HepG2 (cell line): ENCODE measurements at regions of chr6 and their contacts with region 1.

Region 1: DNA sequence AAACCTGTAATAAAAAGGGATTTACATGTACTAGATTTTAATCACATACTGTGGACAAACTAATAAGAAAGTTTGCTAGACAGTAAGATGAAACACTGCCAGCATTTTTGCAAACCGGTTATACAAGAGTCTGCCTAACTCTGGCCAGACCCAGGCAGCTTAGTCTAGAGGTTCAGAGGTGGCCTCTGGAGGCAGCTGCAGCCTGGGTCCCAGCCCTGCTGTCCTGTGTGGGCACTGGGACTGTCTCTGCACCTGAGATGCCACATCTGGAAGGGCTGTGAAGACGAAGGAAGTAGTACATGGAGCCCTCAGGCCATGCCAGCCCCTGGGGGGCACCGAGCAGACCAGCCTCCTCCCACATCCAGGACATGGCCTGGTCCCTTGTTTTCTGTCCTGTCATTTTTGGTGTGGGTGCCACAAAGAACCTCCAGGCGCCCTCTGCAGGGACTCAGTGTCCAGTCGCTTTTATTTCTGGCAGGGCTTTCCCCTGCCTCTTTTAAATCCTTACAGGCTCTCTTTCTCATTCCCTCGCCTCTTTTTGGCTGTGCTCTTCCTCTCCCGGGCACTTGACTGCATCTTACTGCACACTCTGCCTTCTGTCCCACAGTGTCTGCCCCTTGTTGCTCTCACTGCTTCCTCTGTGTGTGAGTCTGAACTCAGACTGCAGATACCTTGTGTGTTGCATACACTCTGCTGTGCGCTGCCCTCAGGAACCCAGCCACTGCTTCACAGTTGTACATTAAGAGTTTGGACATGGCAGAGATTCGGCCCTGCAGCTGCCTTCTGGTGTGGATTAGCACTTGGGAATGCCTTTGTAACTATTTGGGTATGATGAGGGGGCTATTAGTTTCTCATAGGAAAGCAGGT is 216.7 kb downstream of the ZDHHC14 start:
- DNase-seq: peak; percentile 56
- ATAC-seq: peak; percentile 90
- H3K4me3 ChIP-seq: no peak overlapping the region
- H3K27ac ChIP-seq: no peak overlapping the region
- H3K4me1 ChIP-seq: peaks cover 9% of the 10 kb centered on the region; the same call in 1 of the 2 replicates
- H3K27me3 ChIP-seq: no peaks in the 10 kb centered on the region
- CTCF ChIP-seq: peak; percentile 90
- EP300 ChIP-seq: no peak
- POLR2A ChIP-seq: no peak
- RAD21 ChIP-seq: peak; percentile 94

Region 2: GRCh38 chr6:157314705-157315321 is 282.9 kb before region 1 on chr6:
- CTCF ChIA-PET with region 1: interaction called, 15 read pairs
- POLR2A ChIA-PET with region 1: no interaction called
- in situ Hi-C with region 1: no loop called
- intact Hi-C with region 1: loop called (anchors 1 kb)
- DNase-seq: peak; percentile 76
- ATAC-seq: peak; percentile 87
- H3K4me3 ChIP-seq: no peak overlapping the region
- H3K27ac ChIP-seq: no peak overlapping the region
- H3K4me1 ChIP-seq: peaks cover 8% of the 10 kb centered on the region; the same call in 1 of the 2 replicates
- H3K27me3 ChIP-seq: no peaks in the 10 kb centered on the region
- CTCF ChIP-seq: peak; percentile 83
- EP300 ChIP-seq: no peak
- POLR2A ChIP-seq: no peak
- RAD21 ChIP-seq: peak; percentile 91

Region 3: GRCh38 chr6:157339432-157339831 is 258.2 kb before region 1 on chr6:
- CTCF ChIA-PET with region 1: no interaction called
- POLR2A ChIA-PET with region 1: no interaction called
- in situ Hi-C with region 1: no loop called
- intact Hi-C with region 1: loop called (anchors 1 kb)
- DNase-seq: no peak
- ATAC-seq: peak; percentile 68
- H3K4me3 ChIP-seq: no peak overlapping the region
- H3K27ac ChIP-seq: no peak overlapping the region
- H3K4me1 ChIP-seq: peaks cover 15% of the 10 kb centered on the region
- H3K27me3 ChIP-seq: peaks cover 0 to 5% of the 10 kb centered on the region in 2 experiments; a peak in 3 of 5 replicates
- CTCF ChIP-seq: peak; percentile 81
- EP300 ChIP-seq: no peak
- POLR2A ChIP-seq: no peak
- RAD21 ChIP-seq: peak; percentile 62; the same call in 1 of the 2 replicates

Region 4: GRCh38 chr6:157379656-157380454 is 217.8 kb before region 1 on chr6:
- CTCF ChIA-PET with region 1: no interaction called
- POLR2A ChIA-PET with region 1: no interaction called
- in situ Hi-C with region 1: no loop called
- intact Hi-C with region 1: loop called (anchors 2 kb)
- DNase-seq: peak; percentile 90
- ATAC-seq: peak; percentile 94
- H3K4me3 ChIP-seq: peak overlapping the region; percentile 91 to 95 (median 92)
- H3K27ac ChIP-seq: peak overlapping the region; percentile 56
- H3K4me1 ChIP-seq: peaks cover 47% of the 10 kb centered on the region
- H3K27me3 ChIP-seq: no peaks in the 10 kb centered on the region; a peak in 1 of 5 replicates
- CTCF ChIP-seq: peak; percentile 19; the same call in 1 of the 2 replicates
- EP300 ChIP-seq: no peak
- POLR2A ChIP-seq: peak in 1 of 2 experiments; percentile 49; a peak in 2 of 4 replicates
- RAD21 ChIP-seq: no peak

Region 5: DNA sequence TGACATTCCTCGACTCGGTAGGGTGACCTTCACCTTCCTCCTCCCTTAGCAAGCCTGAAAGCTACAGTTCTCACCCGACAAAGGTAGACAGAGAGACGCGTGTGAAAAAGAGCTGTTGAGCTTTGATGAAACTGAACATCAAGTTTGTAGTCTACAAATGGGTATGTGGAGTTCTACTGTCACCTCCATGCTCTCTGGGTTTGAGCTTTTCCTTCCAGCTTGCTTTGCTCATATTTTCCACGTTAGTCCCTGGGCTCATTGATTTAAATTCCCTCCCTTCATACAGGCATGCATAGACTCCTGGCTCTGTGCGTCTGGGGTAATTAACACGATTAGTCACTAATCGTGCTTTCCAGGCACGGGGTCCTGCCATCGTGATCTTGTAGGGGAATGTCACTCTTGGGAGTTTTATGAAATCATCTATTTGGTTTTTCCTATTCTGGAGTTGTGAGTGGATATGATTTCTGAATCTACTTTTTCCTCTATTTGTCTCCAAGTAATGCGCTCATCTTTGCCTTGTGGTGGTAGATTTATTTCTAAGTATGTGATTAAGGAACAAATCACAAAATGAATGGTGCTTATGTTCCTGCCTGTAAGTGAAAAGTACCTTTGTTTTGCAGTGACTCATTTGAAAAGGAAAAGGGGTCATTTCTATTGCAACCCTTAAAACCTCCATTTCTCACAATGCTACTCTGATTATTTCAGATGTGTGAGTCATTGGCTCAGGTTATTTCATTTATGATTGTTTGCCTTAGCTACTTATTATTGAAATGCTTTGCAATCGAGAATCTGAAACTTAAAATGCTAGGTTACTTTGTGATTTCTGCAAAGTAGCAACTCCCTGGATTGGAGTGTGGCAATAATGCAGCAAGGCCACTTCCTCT is 62.1 kb before region 1 on chr6:
- CTCF ChIA-PET with region 1: no interaction called
- POLR2A ChIA-PET with region 1: interaction called, 4 read pairs
- in situ Hi-C with region 1: no loop called
- intact Hi-C with region 1: loop called (anchors 2 kb)
- DNase-seq: peak; percentile 86
- ATAC-seq: no peak
- H3K4me3 ChIP-seq: peak overlapping the region in 2 of 3 experiments; percentile 19; a peak in 3 of 6 replicates
- H3K27ac ChIP-seq: peak overlapping the region; percentile 64
- H3K4me1 ChIP-seq: peaks cover 100% of the 10 kb centered on the region
- H3K27me3 ChIP-seq: no peaks in the 10 kb centered on the region
- CTCF ChIP-seq: no peak
- EP300 ChIP-seq: no peak
- POLR2A ChIP-seq: peak in 1 of 2 experiments; percentile 40; a peak in 1 of 4 replicates
- RAD21 ChIP-seq: no peak